ENCODE measurements at regions of chr2 and their contacts with region 1.

Region 1: DNA sequence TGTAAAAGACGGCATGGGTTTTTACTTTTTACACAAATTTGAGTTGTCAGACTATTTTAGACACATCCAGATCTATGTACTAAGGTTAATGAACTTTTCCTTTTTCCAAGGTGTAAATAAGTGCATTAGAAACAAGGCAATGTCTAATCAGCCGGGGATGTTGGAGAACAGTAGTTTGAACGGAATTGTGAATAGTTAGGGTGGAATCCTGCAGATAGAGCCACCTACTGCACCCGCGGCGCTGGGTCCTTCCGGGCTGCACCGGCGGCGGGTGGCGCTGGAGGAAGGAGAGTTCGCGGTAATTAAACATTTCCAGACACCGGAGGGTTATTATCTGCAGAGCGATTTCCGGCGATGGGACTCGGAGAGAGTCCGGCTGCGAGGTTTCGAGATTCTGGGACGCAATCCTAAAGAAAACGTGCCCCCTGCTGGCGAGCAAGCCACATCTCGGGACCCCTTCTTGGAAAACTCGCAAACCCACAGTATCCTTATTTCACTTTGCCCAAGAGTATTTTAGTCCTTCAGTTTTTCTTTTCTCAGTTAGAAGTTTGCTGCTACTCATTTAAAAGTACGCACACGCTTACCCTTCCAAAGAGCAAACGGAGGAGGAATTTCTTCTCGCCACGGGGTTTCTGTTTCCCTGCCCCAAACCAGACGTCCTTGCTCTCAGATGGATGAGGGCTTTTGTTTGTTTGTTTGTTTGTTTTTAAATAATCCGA is 4.5 kb upstream of the OSR1 start:
- DNase-seq: peak; percentile 84
- H3K4me3 ChIP-seq: peak overlapping the region; percentile 26 to 60 (median 46)
- H3K27ac ChIP-seq: peak overlapping the region; percentile 66 to 89 (median 70)
- H3K4me1 ChIP-seq: peaks cover 0 to 33% (median 21%) of the 10 kb centered on the region in 4 donors
- H3K27me3 ChIP-seq: peaks cover 58% of the 10 kb centered on the region
- CTCF ChIP-seq: peak; percentile 72 to 79 (median 77)
- EP300 ChIP-seq: no peak
- POLR2A ChIP-seq: no peak

Region 2: DNA sequence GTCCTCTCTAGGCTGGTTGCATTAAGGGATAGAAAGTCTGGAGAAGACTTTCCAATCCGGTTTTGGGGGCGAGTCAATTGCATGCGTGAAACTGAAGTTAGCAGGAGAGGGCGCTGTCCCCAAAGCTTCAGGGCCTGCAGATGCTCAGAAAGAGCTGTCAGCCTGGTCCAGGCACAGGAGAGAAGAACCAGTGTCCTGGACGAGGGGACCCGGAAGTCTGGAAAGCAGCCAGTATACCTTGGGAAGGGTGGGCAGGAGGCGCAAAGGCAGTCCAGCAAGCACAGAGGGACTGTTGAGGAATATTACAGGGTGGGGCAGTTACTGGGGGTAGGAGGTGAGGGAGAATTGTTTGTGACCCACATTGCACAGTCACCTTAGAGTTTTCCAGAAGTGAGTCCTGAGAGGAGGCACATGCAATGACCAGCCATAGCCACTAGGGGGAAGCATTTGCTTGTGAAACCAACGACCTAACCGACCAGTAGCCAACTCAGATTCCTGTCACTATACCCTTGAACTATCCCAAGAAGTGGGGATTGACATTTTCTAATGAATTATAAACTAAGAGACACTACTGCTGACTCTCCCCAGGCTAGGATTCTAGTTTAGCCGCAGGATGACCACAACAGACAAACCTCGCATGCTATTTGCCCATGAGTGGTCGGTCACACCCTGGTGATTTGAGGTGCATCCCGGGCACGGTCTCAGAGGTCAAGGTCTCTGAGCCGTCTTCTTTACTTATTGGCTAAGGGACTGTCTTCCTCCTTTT is 975.3 kb before region 1 on chr2:
- in situ Hi-C with region 1: loop called in 1 of 4 experiments (anchors 25 kb)
- intact Hi-C with region 1: no loop called
- DNase-seq: peak; percentile 78
- H3K4me3 ChIP-seq: no peak overlapping the region
- H3K27ac ChIP-seq: peak overlapping the region in 2 of 4 donors; percentile 12 to 69
- H3K4me1 ChIP-seq: no peaks in the 10 kb centered on the region
- H3K27me3 ChIP-seq: no peaks in the 10 kb centered on the region
- CTCF ChIP-seq: peak; percentile 87 to 97 (median 92)
- EP300 ChIP-seq: no peak
- POLR2A ChIP-seq: no peak

Region 3: DNA sequence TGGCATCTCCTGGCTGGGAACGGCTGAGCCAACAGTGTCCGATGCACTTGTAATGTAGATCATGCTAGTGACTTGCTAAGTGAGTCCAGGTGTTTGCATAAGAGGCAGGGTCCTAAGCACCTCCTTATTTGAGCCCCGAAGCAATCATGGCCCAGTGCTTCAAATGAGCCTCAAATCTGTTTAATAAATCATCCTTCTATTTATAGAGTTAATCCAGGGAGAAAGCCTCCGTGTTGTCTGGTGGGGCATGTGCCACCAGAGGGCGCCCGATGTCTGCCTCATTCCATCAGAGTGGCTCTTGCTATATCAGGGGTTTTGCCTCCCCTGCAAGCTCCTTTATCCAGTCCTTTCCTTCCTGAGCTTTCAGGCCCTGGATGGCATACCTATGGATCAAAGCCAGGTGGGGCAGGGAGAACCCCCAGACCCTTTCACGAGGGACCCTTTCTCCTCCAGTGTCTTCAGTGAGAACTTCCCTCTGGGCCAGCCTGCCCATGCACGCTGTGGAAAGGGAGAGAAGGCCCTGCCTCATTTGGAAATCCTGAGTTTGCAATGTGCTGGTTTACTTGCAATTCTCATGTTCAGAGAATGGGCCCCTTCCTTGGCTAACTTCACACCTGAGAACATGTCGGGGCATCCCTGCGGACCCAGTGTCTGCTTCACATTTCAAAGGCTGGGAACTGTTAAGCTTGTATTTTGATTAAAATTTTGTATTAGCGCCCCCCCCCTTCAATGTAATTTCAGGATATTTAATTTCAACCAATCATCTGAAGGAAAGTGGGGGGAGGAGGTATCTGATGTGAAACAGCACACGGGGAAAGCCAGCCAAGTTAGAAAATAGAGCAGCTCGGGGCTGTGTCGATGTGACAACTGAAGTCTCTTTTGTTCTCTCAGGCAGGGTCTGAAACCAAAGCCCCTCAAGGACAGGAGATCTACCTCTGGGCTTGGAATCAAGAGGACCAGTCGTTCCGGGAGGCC is 842.2 kb before region 1 on chr2:
- in situ Hi-C with region 1: loop called (anchors 25 kb)
- intact Hi-C with region 1: loop called (anchors 5 kb)
- DNase-seq: peak; percentile 82
- H3K4me3 ChIP-seq: no peak overlapping the region
- H3K27ac ChIP-seq: peak overlapping the region; percentile 42 to 75 (median 56)
- H3K4me1 ChIP-seq: peaks cover 0 to 16% (median 1%) of the 10 kb centered on the region in 4 donors
- H3K27me3 ChIP-seq: no peaks in the 10 kb centered on the region
- CTCF ChIP-seq: peak; percentile 86 to 95 (median 89)
- EP300 ChIP-seq: no peak
- POLR2A ChIP-seq: no peak

Region 4: DNA sequence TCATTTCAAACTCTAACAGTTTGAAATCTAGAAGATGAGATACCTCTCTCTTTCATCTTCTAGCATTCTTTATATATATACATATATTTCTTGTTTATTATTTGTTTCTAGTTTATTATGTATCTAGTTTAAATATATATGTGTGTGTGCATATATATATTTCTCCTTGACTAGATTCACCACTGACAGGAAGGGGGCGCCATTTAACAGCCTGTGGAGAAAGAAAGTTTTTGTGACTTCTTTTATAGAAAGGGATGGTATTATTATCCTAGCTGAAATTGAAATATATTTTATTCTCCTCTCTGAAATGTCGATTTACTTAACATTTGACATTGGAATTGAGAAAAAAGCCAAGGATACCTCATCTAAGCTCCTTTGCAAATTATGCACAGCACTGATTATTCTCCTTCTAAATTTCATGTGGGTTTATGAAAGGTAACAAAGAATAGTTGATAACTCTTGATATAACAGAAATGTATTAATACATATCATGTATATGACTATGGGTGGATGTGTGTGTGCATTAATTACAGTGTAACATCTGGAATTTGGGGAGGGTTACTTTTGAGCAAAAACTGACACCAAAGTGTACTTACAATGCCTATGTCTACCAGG is 612.9 kb before region 1 on chr2:
- in situ Hi-C with region 1: loop called in 3 of 4 experiments (anchors 10 to 25 kb)
- intact Hi-C with region 1: no loop called
- DNase-seq: peak; percentile 49
- H3K4me3 ChIP-seq: no peak overlapping the region
- H3K27ac ChIP-seq: no peak overlapping the region
- H3K4me1 ChIP-seq: peaks cover 0 to 15% (median 5%) of the 10 kb centered on the region in 4 donors
- H3K27me3 ChIP-seq: no peaks in the 10 kb centered on the region
- CTCF ChIP-seq: peak; percentile 69 to 82 (median 74)
- EP300 ChIP-seq: no peak
- POLR2A ChIP-seq: no peak

Region 5: GRCh38 chr2:19336781-19337180 is 26.1 kb before region 1 on chr2:
- in situ Hi-C with region 1: no loop called
- intact Hi-C with region 1: no loop called
- DNase-seq: no peak
- H3K4me3 ChIP-seq: no peak overlapping the region
- H3K27ac ChIP-seq: no peak overlapping the region
- H3K4me1 ChIP-seq: peaks cover 0 to 7% (median 0%) of the 10 kb centered on the region in 4 donors
- H3K27me3 ChIP-seq: no peaks in the 10 kb centered on the region
- CTCF ChIP-seq: no peak
- EP300 ChIP-seq: no peak
- POLR2A ChIP-seq: no peak

Measured in transverse colon (tissue), 4 donors.